ENCODE measurements at regions of chr16 and their contacts with region 1.

Region 1: GRCh38 chr16:74695450-74696422 is 4.9 kb downstream of the MLKL start:
- DNase-seq: peak; percentile 78
- ATAC-seq: peak; percentile 79
- H3K4me3 Mint-ChIP-seq: peak overlapping the region; percentile 63
- H3K27ac Mint-ChIP-seq: peak overlapping the region; percentile 60
- H3K4me1 Mint-ChIP-seq: peaks cover 45% of the 10 kb centered on the region
- H3K27me3 Mint-ChIP-seq: no peaks in the 10 kb centered on the region

Region 2: DNA sequence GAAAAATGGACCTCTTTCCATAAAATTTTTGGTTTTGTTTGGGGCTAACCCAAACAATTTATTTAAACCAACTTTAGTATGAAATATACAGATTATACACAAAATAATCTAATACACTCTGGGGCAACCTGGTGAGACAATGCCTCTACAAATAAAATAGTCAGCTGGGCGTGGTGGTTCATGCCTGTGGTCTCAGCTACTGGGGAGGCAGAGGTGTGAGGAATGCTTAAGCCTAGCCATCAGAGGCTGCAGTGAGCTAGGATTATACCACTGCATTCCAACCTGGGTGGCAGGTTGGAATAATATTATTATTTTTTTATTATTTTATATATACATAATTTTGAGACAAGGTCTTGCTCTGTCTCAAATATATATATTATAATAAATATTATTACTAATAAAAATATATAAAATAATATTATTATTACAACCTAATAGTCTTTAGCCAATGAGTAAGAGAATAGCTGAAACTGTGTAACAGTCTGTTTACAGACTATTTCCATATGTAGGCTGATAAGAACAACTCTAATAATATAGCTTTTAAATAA is 139.3 kb before region 1 on chr16:
- CTCF ChIA-PET with region 1: no interaction called
- POLR2A ChIA-PET with region 1: no interaction called
- intact Hi-C with region 1: no loop called
- DNase-seq: no peak
- ATAC-seq: no peak
- H3K4me3 Mint-ChIP-seq: no peak overlapping the region
- H3K27ac Mint-ChIP-seq: no peak overlapping the region
- H3K4me1 Mint-ChIP-seq: peaks cover 34% of the 10 kb centered on the region
- H3K27me3 Mint-ChIP-seq: no peaks in the 10 kb centered on the region

Region 3: DNA sequence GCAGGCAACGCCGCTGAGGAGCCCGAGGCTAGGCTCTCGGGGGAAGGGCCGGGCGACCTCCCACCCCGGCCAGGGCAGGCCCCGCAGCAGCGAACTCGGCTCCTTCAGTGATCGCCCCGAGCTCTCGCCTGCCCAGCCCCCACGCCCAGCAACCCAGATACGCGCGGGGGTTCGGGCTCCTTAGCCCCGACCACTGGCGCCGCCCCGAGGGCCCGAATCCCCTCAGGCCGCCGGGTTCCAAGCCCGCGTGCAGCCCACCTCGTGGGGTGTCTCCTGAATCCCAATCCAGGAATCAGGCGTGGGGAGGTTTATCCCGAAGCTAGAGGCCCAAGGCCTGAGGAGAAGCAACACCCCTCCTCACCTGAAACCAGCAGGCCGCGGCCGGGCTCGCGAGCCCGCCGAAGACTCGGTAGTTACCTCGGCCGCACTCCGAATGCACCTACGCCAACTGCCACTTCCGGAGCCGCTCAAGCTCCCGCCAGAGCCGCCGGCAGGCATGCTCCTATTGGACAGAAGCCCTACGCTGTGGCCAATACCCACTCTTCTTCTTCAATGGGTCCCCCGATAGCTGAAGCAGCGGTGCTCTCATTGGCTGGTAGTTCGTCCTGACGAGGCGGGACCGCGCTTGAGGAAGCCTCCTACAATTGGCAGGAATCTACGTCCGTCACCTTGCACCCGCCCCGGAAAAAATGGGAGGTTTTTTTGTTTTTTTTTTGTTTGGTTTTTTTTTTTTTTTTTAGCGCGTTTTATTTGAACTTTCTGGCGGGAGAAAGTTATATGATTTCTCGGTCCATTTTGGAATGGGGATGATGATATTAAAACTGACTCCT is 29.1 kb before region 1 on chr16 and contains the start of gene RFWD3:
- CTCF ChIA-PET with region 1: interaction called, 12 read pairs
- POLR2A ChIA-PET with region 1: interaction called, 19 read pairs
- intact Hi-C with region 1: loop called (anchors 1 to 2 kb)
- DNase-seq: peak; percentile 98
- ATAC-seq: peak; percentile 100
- H3K4me3 Mint-ChIP-seq: peak within 1 kb of the TSS; percentile 83
- H3K27ac Mint-ChIP-seq: peak within 1 kb of the TSS; percentile 97
- H3K4me1 Mint-ChIP-seq: peaks cover 42% of the 10 kb centered on the region
- H3K27me3 Mint-ChIP-seq: no peaks in the 10 kb centered on the region
- total RNA-seq, gene RFWD3: 92.7 to 102 TPM

Region 4: DNA sequence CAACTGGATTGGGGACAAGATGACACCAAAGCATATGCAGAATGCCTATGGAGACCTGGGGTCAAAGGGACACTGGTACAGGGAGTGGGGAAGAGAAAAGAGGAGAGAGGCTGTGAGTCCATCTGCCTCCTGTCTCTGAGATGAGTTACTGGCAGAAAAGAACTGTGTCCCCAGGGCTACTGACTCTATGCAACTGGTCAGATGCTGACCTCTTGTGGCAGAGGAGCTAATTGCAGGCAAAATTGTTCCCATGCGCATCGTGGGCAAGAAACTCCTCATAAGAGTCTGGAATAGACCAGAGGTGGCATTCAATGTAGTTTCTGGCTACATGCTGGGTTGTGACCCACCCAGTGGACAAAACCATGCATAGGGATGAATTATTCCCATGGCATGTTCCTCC is 31.0 kb after region 1 on chr16:
- CTCF ChIA-PET with region 1: interaction called, 10 read pairs
- POLR2A ChIA-PET with region 1: no interaction called
- intact Hi-C with region 1: no loop called
- DNase-seq: peak; percentile 70
- ATAC-seq: peak; percentile 65
- H3K4me3 Mint-ChIP-seq: no peak overlapping the region
- H3K27ac Mint-ChIP-seq: no peak overlapping the region
- H3K4me1 Mint-ChIP-seq: peaks cover 12% of the 10 kb centered on the region
- H3K27me3 Mint-ChIP-seq: no peaks in the 10 kb centered on the region

Region 5: GRCh38 chr16:74862741-74863244 is 167.1 kb after region 1 on chr16:
- CTCF ChIA-PET with region 1: interaction called, 12 read pairs
- POLR2A ChIA-PET with region 1: no interaction called
- intact Hi-C with region 1: no loop called
- DNase-seq: peak; percentile 37
- ATAC-seq: peak; percentile 82
- H3K4me3 Mint-ChIP-seq: no peak overlapping the region
- H3K27ac Mint-ChIP-seq: no peak overlapping the region
- H3K4me1 Mint-ChIP-seq: peaks cover 6% of the 10 kb centered on the region
- H3K27me3 Mint-ChIP-seq: no peaks in the 10 kb centered on the region

Region 6: DNA sequence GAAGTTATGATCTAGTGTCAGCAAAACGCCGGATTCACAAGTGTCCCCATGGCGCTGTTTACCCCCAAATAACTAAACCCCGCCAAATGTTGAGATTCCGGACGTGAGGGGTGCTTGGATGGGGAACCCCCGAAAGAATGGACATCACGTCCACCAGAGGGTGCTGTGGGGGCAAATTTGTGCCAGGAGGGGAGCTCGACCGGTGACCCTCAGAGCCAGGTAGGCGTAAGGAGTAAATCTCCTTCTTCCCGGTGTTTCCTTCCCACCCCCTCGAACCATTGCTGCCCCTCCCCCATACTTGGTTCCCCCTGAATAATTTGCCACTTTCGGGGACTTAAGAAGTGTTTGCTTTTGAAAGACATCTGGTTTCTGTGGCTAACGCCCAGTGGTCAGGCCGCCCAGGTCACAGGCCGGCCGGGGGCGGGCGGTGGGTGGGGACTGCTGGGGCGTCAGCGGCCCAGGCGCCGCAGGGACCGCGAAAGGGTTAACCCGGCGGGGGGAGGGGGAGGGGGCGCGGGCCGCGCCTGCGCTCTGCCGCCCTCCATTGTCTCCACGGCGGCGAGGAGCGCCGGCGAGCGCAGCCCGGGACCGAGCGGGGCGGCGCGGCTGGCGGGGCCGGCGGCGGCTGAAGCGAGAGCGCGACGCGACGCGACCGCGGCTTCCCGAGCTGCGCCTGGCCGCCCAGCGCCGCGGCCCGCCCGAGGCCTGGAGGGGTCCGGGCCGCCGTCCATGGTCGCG is 302.9 kb after region 1 on chr16 and contains the start of gene ZNRF1:
- CTCF ChIA-PET with region 1: no interaction called
- POLR2A ChIA-PET with region 1: no interaction called
- intact Hi-C with region 1: loop called in 1 of 2 experiments (anchors 5 kb)
- DNase-seq: peak; percentile 91
- ATAC-seq: peak; percentile 80
- H3K4me3 Mint-ChIP-seq: peak within 1 kb of the TSS; percentile 87
- H3K27ac Mint-ChIP-seq: peak within 1 kb of the TSS; percentile 75
- H3K4me1 Mint-ChIP-seq: peaks cover 39% of the 10 kb centered on the region
- H3K27me3 Mint-ChIP-seq: peaks cover 4% of the 10 kb centered on the region
- total RNA-seq, gene ZNRF1: 35.2 to 42.9 TPM